CD8-positive, alpha-beta T cell (primary cell): ENCODE measurements at regions of chr19 and their contacts with region 1.

Region 1: DNA sequence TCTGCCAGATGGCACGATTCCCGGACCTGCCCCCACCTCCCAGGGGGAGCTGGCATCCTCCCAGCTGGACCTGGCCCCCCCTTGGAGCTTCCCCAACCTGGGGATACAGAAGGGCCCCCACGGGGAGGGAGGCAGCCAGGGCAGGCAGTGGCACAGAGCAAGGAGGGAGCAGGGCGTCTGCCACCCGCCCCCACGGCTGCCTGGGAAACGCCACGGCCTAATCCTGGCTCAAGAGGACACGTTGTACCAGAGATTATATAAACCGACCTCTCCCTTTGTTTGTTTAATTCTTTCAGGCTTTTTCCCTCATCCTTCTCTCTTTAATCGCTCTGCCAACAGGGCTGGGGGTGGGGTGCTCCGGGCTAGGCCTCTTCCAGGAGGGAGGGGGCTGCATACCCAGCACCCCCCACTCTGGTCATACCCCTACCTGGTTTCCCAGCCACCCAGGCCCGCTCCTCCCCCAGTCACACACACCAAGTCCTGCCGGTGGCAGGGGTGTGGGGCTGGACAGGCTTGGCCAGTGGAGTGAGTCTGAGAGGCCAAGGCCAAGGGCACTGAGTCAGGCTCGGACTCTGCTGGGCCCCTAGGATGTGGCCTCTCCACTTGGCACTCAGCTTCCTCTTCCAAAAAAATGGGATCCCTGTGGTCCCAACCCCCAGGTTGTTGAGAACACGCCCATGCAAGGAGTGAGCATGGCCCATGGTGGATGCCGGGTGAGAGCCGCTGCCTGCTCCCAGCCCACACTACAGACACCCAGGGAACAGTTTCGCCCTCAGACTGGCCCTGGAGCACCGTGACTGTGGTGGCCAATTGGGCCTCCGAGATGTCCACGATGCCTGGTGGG is 29.5 kb upstream of the NFIC start:
- DNase-seq: no peak
- ATAC-seq: no peak
- H3K4me3 ChIP-seq: no peak overlapping the region
- H3K4me3 Mint-ChIP-seq: no peak overlapping the region
- H3K27ac ChIP-seq: no peak overlapping the region
- H3K27ac Mint-ChIP-seq: no peak overlapping the region
- H3K4me1 ChIP-seq: peaks cover 12% of the 10 kb centered on the region
- H3K4me1 Mint-ChIP-seq: peaks cover 11% of the 10 kb centered on the region
- H3K27me3 ChIP-seq: peaks cover 0 to 3% of the 10 kb centered on the region in 2 experiments
- H3K27me3 Mint-ChIP-seq: no peaks in the 10 kb centered on the region
- CTCF ChIP-seq: no peak

Region 2: DNA sequence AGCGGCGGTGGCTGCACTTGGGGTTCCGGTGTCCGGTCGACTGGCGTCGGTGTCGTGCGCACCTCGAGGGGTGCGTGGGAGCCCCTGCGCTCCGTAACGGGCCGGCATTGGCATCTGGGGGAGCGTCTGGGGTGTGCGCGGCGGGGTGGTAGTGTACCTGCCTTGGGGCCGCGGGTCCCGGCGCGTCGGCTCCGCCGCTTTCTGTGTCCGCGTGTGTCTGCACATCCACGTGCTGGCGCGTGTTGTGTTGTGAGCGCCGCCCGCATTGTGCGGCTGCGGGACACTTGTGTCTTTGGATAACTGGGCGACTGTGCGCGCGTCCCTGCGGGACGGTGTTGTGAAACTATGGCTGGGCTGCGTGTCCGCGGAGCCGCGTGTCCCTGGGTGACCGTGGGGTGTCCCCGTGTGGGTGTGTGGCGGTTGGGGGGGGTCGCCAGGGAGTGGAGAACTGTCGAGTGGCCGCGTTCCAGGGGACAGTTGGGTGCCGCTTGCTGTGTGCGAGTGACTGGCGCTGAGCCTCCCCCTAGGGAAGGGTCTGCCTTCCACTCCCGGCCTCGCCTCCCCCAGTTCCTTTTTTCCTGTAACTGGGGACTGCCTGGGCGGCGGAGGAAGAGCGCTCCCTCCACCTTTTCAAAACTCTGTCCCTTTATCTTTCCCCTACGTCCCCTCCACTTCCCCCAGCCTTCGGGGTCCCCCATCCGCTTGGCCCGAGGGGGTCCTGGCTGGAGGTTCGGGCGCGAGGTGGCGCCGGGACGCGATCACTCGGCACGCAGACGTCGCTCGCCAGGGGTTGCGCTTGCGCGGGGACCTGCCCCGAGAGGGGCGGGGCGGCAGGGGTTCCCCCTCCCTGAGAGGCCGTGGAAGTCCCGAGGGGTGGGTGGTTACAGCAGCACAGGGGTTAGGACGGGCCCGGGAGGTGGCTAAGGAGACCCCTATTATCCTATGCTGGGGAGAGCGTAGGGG is 23.8 kb after region 1 on chr19:
- CTCF ChIA-PET with region 1: no interaction called
- POLR2A ChIA-PET with region 1: interaction called, 5 read pairs
- intact Hi-C with region 1: loop called (anchors 1 to 2 kb)
- DNase-seq: peak; percentile 35 to 90 (median 74)
- ATAC-seq: peak; percentile 55
- H3K4me3 ChIP-seq: peak overlapping the region; percentile 66 to 69
- H3K4me3 Mint-ChIP-seq: peak overlapping the region; percentile 90
- H3K27ac ChIP-seq: peak overlapping the region; percentile 38 to 63
- H3K27ac Mint-ChIP-seq: peak overlapping the region; percentile 91
- H3K4me1 ChIP-seq: peaks cover 31% of the 10 kb centered on the region
- H3K4me1 Mint-ChIP-seq: peaks cover 57% of the 10 kb centered on the region
- H3K27me3 ChIP-seq: no peaks in the 10 kb centered on the region
- H3K27me3 Mint-ChIP-seq: no peaks in the 10 kb centered on the region
- CTCF ChIP-seq: no peak